SK-N-SH (cell line): ENCODE measurements at regions of chr7 and their contacts with region 1.

Region 1: GRCh38 chr7:23570592-23571200 is 26.5 kb upstream of the CCDC126 start:
- DNase-seq: peak; percentile 88
- H3K4me3 ChIP-seq: no peak overlapping the region; a peak in 1 of 4 replicates
- H3K27ac ChIP-seq: no peak overlapping the region
- H3K4me1 ChIP-seq: no peaks in the 10 kb centered on the region; a peak in 1 of 4 replicates
- H3K27me3 ChIP-seq: no peaks in the 10 kb centered on the region
- CTCF ChIP-seq: peak; percentile 98
- EP300 ChIP-seq: no peak
- RAD21 ChIP-seq: peak; percentile 100

Region 2: GRCh38 chr7:23586159-23586558 is 15.5 kb after region 1 on chr7:
- CTCF ChIA-PET with region 1: interaction called, 13 read pairs
- POLR2A ChIA-PET with region 1: no interaction called
- DNase-seq: no peak
- H3K4me3 ChIP-seq: no peak overlapping the region
- H3K27ac ChIP-seq: no peak overlapping the region
- H3K4me1 ChIP-seq: no peaks in the 10 kb centered on the region
- H3K27me3 ChIP-seq: no peaks in the 10 kb centered on the region; the same call in 1 of the 2 replicates
- CTCF ChIP-seq: no peak
- EP300 ChIP-seq: no peak
- RAD21 ChIP-seq: no peak

Region 3: DNA sequence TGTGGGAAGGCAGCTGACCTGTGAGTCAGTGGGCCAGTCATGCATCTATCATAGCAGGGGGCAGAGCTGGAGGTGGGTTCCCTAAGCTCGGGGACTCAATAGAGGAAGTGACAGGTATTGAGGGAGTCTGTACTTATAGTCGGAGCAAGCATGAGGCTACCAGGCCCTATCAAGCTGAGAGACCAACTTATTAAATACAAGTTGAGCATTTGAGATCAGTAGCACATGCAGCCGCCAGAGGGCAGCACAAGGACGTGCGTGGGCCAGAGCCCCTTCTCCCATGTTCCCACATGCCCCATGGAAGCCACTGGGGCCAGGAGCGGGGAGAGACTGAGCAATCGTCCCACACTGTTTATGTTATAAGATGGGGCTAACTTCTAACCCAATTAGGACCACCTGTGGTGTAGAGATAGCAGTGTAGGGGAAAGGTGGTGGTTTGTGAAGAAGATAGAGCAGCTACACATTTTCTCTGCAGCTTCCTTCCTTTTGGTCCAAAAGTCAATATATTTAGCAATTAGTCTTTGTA is 126.3 kb after region 1 on chr7:
- CTCF ChIA-PET with region 1: interaction called, 13 read pairs
- POLR2A ChIA-PET with region 1: no interaction called
- DNase-seq: peak; percentile 61
- H3K4me3 ChIP-seq: no peak overlapping the region
- H3K27ac ChIP-seq: no peak overlapping the region
- H3K4me1 ChIP-seq: no peaks in the 10 kb centered on the region
- H3K27me3 ChIP-seq: no peaks in the 10 kb centered on the region
- CTCF ChIP-seq: peak; percentile 77
- EP300 ChIP-seq: no peak
- RAD21 ChIP-seq: peak; percentile 54

Region 4: GRCh38 chr7:23712368-23713284 is 141.9 kb after region 1 on chr7:
- CTCF ChIA-PET with region 1: interaction called, 188 read pairs
- POLR2A ChIA-PET with region 1: no interaction called
- DNase-seq: peak; percentile 79
- H3K4me3 ChIP-seq: no peak overlapping the region
- H3K27ac ChIP-seq: no peak overlapping the region
- H3K4me1 ChIP-seq: peaks cover 3 to 14% of the 10 kb centered on the region in 2 experiments; a peak in 2 of 4 replicates
- H3K27me3 ChIP-seq: no peaks in the 10 kb centered on the region
- CTCF ChIP-seq: peak; percentile 89
- EP300 ChIP-seq: no peak
- RAD21 ChIP-seq: peak; percentile 99

Region 5: DNA sequence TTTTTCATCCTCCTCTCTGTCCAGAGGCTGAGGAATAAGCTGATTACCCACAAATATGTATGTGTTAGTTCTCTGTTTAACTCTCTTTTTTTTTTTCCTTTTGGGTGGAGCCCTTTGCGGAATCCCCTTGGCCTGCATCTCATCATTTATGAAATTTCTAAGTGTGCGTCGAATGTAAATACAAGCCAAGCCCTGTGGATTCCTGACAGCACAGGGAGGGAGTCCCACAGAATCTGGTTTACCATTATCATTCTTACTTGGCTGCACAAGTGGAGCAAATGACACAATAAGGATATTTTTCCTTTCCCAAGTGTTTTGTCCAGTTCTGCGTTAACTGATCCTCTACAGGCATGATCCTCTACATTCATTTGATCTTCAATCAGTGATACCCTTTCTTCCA is 150.8 kb after region 1 on chr7:
- CTCF ChIA-PET with region 1: interaction called, 16 read pairs
- POLR2A ChIA-PET with region 1: no interaction called
- DNase-seq: no peak
- H3K4me3 ChIP-seq: no peak overlapping the region
- H3K27ac ChIP-seq: no peak overlapping the region
- H3K4me1 ChIP-seq: no peaks in the 10 kb centered on the region
- H3K27me3 ChIP-seq: no peaks in the 10 kb centered on the region
- CTCF ChIP-seq: no peak
- EP300 ChIP-seq: no peak
- RAD21 ChIP-seq: no peak